Posterior vena cava (tissue), 2 donors: ENCODE measurements at regions of chr17 and their contacts with region 1.

Region 1: GRCh38 chr17:43024407-43025289 is at the start of gene RND2:
- DNase-seq: peak; percentile 96
- total RNA-seq, gene RND2: 1.9 to 2.2 TPM

Region 2: DNA sequence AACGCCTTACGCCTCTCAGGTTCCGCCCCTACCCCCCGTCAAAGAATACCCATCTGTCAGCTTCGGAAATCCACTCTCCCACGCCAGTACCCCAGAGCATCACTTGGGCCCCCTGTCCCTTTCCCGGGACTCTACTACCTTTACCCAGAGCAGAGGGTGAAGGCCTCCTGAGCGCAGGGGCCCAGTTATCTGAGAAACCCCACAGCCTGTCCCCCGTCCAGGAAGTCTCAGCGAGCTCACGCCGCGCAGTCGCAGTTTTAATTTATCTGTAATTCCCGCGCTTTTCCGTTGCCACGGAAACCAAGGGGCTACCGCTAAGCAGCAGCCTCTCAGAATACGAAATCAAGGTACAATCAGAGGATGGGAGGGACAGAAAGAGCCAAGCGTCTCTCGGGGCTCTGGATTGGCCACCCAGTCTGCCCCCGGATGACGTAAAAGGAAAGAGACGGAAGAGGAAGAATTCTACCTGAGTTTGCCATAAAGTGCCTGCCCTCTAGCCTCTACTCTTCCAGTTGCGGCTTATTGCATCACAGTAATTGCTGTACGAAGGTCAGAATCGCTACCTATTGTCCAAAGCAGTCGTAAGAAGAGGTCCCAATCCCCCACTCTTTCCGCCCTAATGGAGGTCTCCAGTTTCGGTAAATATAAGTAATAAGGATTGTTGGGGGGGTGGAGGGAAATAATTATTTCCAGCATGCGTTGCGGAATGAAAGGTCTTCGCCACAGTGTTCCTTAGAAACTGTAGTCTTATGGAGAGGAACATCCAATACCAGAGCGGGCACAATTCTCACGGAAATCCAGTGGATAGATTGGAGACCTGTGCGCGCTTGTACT is 100.7 kb after region 1 on chr17 and contains the start of gene BRCA1:
- intact Hi-C with region 1: loop called in 1 of 2 experiments (anchors 5 kb)
- DNase-seq: peak; percentile 97
- total RNA-seq, gene BRCA1: 4.6 to 5.9 TPM

Region 3: DNA sequence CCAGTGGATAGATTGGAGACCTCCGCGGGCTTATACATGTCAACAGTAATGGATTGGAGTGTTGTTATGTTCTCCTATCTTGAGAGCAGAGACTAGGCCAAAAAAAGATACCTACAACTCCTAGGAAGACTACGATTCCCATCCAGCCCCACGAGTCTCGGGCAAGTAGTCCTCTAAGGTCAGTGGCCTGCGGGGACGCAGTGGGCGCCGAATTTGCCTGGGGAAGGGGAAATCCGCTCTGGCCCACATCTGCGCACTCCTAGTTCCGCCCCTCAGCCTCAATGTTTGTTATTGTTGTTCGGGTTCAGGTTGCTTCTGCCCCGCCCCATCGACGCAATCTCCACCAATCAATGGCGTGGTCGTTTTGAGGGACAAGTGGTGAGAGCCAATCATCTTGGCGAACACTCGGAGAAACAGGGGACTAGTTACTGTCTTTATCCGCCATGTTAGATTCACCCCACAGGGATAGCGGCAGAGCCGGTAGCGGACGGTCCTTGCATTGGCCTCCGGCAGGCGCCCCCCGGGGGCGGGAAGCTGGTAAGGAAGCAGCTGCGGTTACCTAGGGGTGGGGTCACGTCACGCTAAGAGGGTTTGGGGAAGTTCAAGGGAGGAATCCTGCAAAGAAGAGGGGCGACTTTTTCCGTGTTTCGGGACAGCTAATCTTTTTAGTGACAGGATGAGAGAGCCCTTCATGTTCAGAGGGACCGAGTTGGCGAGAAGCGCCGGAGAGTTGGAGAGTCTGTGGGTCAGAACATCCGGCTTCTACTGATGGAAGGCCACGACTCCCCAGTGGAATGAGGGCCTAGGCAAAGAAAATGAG is 146.3 kb after region 1 on chr17 and contains the start of gene NBR1:
- intact Hi-C with region 1: loop called (anchors 10 kb)
- DNase-seq: peak; percentile 97
- total RNA-seq, gene NBR1: 64.7 to 69.1 TPM

Region 4: DNA sequence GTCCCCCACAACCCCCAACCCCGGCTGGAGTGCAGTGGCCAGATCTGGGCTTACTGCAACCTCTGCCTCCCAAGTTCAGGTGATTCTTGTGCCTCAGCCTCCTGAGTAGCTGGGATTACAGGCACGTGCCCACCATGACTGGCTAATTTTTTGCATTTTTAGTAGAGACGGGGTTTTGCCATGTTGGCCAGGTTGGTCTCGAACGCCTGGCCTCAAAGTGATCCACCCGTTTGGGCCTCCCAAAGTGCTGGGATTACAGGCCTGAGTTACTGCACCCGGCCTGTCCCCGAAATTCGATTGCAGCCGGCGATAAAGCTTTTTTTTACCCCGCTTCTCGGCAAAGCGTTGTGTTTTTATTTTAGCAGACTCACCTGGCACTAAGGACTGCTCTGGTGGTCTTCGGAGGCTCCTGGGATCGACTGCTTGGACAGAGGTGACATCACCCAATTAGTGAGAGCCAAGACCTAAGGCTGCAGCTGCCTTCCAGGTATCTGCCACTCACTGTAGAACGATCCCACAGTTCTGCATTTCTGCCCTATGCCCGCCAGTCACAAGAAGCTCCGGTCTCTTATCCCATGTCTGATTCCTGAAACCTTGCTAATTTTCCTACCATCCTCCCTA is 292.0 kb after region 1 on chr17:
- intact Hi-C with region 1: loop called in 1 of 2 experiments (anchors 10 kb)
- DNase-seq: peak; percentile 77